Activated B cell treated with CpG ODN at 0.5 μM for 24 hours (primary cell): ENCODE measurements at regions of chr6 and their contacts with region 1.

Region 1: DNA sequence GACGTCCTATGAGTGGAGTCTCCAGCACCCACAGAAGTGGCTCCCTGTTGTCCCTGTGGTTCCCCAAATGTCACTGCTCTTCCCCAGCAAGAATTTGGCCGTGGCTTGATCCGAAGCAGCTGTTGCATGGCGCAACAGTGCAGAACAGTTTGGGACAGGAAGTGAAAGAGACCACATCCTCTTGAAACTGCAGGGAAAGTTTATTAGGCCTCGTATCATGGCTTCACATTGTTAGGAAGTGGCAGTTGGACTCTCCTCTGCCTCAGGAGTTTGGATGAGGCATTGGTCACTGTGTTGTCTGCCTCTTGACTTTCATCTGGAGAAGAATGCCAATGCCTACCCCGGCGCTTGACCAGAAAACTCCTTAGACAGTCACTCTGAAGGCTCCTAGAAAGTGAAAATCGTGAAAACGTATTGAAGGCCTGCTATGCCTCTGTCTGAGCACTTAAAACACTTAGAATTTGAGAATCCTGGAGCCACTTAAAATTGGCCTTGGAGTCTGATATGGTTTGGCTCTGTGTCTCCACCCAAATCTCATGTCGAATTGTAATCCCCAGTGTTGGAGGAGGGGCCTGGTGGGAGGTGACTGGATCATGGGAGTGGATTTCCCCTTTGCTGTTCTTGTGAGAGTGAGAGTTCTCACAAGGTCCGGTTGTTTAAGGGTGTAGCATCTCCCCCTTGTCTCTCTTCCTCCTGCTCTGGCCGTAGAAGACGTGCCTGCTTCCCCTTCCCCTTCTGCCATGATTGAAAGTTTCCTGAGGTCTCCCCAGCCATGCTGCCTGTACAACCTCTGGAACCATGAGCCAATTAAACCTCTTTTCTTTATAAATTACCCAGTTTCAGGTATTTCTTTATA is 334.9 kb upstream of the JARID2 start:
- DNase-seq: peak; percentile 34
- ATAC-seq: peak; percentile 92
- H3K4me3 Mint-ChIP-seq: peak overlapping the region; percentile 70
- H3K27ac Mint-ChIP-seq: peak overlapping the region; percentile 88
- H3K4me1 Mint-ChIP-seq: peaks cover 41% of the 10 kb centered on the region
- H3K27me3 Mint-ChIP-seq: no peaks in the 10 kb centered on the region
- CTCF ChIP-seq: no peak

Region 2: DNA sequence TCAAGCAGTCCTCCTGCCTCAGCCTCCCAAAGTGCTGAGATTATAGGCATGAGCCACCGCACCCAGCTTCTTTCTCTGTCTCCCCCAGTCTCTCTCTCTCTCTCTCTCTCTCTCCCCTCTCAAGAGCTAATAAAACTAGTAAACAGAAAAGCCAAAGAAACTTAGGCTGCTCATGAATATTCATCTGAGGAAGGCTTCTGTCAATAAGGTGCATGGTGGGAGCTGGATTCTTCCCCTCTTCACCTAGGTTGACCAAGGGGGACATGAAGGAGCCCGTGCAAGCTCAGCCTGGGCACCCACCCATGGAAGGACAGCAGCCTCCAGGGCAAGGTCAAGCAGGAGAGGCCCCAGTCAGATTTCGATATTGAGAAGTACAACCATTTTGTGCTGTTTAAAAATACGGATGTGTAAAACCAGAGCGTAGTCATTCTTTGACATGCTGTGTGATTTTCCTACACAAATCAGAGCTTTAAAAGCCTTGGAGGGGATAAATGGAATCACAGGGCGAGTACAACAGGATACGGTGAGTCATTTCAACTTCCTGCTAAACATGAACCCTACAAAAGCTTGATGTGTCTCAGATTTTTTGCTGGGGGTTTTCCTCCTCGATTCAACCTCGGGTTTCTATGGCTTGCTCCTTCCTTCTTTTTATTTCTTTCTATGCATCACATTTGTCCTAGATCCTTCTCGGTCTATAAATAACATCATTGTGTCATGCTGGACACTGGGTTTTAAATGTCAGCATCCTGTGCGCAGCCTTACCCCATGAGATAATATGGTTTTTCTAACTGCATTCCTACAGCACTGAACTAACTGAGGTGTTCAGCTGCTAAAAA is 33.9 kb before region 1 on chr6:
- CTCF ChIA-PET with region 1: no interaction called
- POLR2A ChIA-PET with region 1: interaction called, 3 read pairs
- intact Hi-C with region 1: loop called (anchors 1 kb)
- DNase-seq: no peak
- ATAC-seq: peak; percentile 86
- H3K4me3 Mint-ChIP-seq: peak overlapping the region; percentile 53
- H3K27ac Mint-ChIP-seq: peak overlapping the region; percentile 82
- H3K4me1 Mint-ChIP-seq: peaks cover 42% of the 10 kb centered on the region
- H3K27me3 Mint-ChIP-seq: no peaks in the 10 kb centered on the region
- CTCF ChIP-seq: no peak